ENCODE measurements at regions of chr19 and their contacts with region 1.

Region 1: GRCh38 chr19:46661020-46661731 is at the start of gene DACT3:
- DNase-seq: peak; percentile 100
- ATAC-seq: peak; percentile 96 to 97 (median 96)
- H3K4me3 ChIP-seq: peak within 1 kb of the TSS; percentile 46 to 79 (median 70)
- H3K27ac ChIP-seq: peak within 1 kb of the TSS; percentile 5 to 94 (median 72)
- H3K4me1 ChIP-seq: peaks cover 0 to 32% (median 21%) of the 10 kb centered on the region in 12 donors
- H3K27me3 ChIP-seq: peaks cover 0 to 24% (median 0%) of the 10 kb centered on the region in 9 donors
- CTCF ChIP-seq: peak in 3 of 12 donors; percentile 10 to 34 (median 16)
- POLR2A ChIP-seq: peak in 1 of 2 donors; percentile 25
- total RNA-seq, gene DACT3: 8.8 to 23.4 (median 15.1) TPM

Region 2: GRCh38 chr19:45234089-45234869 is 1426.9 kb before region 1 on chr19:
- intact Hi-C with region 1: no loop called
- DNase-seq: no peak
- ATAC-seq: no peak
- H3K4me3 ChIP-seq: peak overlapping the region in 1 of 12 donors; percentile 15
- H3K27ac ChIP-seq: no peak overlapping the region
- H3K4me1 ChIP-seq: peaks cover 0 to 13% (median 3%) of the 10 kb centered on the region in 12 donors
- H3K27me3 ChIP-seq: peaks cover 0 to 24% (median 8%) of the 10 kb centered on the region in 9 donors
- CTCF ChIP-seq: no peak
- POLR2A ChIP-seq: no peak

Region 3: DNA sequence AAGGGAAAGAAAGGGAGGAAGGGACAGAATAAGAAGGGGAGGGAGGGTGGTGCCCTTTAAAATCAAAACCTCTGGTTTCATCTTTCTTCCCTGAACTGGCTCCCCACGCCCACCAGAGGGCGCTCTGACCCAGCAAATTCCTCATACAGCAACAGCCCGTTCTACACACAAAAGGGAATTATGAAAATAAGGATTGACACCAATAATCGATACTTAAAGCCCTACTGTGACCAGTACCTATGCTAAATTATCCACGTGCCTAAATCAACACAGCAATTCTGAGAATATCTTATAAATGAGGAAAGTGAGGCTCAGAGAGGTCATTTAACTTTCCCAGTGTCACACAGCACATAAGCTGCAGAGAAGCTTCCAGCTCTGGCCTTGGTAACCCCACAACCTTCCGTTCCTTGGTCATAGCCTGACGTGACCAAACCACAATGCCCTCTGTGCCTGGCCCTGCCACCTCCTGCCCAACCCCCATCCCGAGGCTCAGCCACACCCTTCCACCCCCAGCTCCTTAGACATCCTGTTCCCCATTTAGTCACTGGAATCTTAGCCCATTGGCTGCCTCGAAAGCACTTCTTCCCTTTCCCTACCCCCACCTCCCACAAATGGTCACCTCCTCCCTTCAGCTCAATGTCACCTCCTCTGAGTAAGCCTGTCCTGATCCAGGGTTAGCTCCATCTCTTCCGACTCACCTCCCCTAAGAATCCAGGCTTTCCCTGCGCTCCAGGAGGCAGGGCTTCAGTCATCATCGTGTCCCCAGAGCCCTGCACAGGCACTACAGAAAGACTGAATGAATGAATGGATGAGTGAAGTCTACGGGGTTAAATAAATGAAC is 131.3 kb before region 1 on chr19:
- intact Hi-C with region 1: loop called in 7 of 10 experiments (anchors 2 to 10 kb)
- DNase-seq: peak; percentile 56 to 82 (median 61)
- ATAC-seq: peak; percentile 39 to 82 (median 73)
- H3K4me3 ChIP-seq: no peak overlapping the region
- H3K27ac ChIP-seq: peak overlapping the region in 1 of 12 donors; percentile 58
- H3K4me1 ChIP-seq: peaks cover 0 to 20% (median 5%) of the 10 kb centered on the region in 12 donors
- H3K27me3 ChIP-seq: peaks cover 0 to 15% (median 0%) of the 10 kb centered on the region in 9 donors
- CTCF ChIP-seq: peak; percentile 86 to 96 (median 92)
- POLR2A ChIP-seq: no peak

Region 4: DNA sequence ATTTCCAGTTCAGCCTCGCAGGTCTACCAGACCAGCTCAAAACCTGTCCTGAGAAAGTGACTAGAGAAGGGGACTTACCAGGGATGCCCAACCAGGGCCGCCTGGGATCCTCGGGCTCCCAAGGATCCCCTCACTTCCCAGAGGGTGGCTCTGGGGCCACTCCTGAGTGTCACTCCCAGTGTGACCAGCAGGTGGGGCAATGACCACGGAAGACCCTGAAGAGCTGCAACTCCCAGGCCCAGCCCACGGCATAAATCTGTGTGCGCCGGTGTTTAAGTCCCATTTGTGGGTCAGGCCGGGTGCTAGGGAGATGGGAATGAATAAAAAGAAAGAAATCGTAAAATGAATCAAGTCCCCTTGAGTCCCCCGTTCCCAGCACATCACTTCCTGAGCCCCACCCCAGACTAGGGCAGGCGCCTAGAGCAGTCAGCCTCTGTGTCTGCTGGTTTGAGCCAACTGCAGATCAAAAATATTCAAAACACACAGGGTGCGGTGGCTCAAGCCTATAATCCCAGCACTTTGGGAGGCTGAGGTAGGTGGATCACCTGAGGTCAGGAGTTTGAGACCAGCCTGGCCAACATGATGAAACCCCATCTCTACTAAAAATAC is 47.0 kb before region 1 on chr19:
- intact Hi-C with region 1: loop called (anchors 1 to 2 kb)
- DNase-seq: peak; percentile 82 to 91 (median 84)
- ATAC-seq: peak; percentile 53 to 77 (median 76)
- H3K4me3 ChIP-seq: no peak overlapping the region
- H3K27ac ChIP-seq: peak overlapping the region in 1 of 12 donors; percentile 30
- H3K4me1 ChIP-seq: peaks cover 0 to 55% (median 24%) of the 10 kb centered on the region in 12 donors
- H3K27me3 ChIP-seq: no peaks in the 10 kb centered on the region
- CTCF ChIP-seq: peak; percentile 76 to 96 (median 88)
- POLR2A ChIP-seq: no peak

Region 5: DNA sequence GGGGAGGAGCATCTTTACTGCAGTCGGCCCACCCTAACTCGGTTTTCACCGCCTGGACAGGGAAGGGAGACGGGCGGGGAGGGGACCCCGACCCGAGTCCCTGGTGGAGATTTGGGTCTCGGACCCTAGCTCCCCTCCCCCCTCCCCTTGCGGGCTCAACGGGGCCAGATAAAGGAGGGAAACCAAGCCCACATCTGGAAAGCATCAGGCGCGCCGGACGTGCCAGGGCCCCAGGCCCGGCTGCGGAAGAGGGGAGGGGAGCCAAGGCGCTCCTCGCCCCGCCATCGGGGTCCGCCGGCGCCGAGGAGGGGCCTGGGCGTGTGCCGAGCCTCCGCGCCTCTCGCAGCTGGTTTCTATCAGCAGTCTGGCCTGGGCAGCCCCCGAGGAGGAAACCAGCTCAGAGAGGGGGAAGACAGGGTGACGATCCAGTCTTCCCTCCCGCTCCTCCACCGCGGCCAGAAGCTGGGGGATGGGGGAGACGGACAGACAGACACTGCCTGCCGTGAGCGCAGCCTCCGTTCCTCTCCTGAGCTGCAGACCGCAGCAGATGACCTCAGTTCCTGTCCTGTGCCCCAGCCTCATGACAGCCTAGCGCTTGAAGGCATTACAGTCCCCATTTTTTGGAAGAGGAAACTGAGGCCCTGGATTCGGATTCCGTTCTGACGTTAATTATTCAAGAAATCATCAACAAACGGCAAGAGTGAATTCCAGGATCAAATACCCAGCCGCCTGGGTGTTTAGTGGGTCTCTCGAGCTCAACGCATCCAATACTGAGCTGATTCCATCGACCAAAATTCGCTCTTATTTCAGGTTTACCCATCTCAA is 21.6 kb before region 1 on chr19:
- intact Hi-C with region 1: loop called in 1 of 10 experiments (anchors 1 kb)
- DNase-seq: peak; percentile 66 to 84 (median 68)
- ATAC-seq: peak in 3 of 4 donors; percentile 20 to 43 (median 30)
- H3K4me3 ChIP-seq: peak overlapping the region; percentile 11 to 58 (median 46)
- H3K27ac ChIP-seq: peak overlapping the region in 9 of 12 donors; percentile 17 to 89 (median 54)
- H3K4me1 ChIP-seq: peaks cover 0 to 29% (median 19%) of the 10 kb centered on the region in 12 donors
- H3K27me3 ChIP-seq: peaks cover 0 to 34% (median 0%) of the 10 kb centered on the region in 9 donors
- CTCF ChIP-seq: no peak
- POLR2A ChIP-seq: no peak

Region 6: DNA sequence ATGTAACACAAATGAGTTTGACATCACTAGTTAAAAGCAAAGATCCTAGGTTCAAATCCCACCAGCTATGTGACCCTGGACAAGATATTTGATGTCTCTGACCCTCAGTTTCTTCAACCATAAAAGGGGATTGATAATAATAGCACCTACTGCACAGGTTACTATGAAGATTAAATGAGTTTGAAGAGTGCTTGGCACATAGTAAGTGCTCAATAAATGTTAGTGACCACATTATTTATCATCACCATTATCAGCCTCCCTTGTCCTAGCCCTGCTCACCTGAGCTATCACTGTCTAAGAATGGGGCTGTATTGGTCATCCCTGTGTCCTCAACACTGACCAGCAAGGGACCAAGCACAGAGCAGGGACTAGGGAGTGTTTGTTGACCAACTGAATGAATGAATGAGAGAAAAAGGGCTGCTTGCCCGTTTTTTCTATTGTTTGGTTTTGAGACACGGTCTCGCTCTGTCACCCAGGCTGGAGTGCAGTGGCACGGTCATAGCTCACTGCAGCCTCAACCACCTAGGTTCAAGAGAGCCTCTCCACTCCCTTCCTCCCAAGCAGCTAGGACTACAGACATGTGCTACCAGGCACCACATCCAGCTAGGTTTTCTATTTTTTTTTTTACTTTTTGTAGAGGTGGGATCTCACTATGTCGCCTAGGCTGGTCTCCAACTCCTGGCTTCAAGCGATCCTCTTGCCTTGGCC is 26.4 kb after region 1 on chr19:
- intact Hi-C with region 1: no loop called
- DNase-seq: no peak
- ATAC-seq: no peak
- H3K4me3 ChIP-seq: no peak overlapping the region
- H3K27ac ChIP-seq: no peak overlapping the region
- H3K4me1 ChIP-seq: no peaks in the 10 kb centered on the region
- H3K27me3 ChIP-seq: no peaks in the 10 kb centered on the region
- CTCF ChIP-seq: no peak
- POLR2A ChIP-seq: no peak